ENCODE measurements at regions of chr19 and their contacts with region 1.

Region 1: DNA sequence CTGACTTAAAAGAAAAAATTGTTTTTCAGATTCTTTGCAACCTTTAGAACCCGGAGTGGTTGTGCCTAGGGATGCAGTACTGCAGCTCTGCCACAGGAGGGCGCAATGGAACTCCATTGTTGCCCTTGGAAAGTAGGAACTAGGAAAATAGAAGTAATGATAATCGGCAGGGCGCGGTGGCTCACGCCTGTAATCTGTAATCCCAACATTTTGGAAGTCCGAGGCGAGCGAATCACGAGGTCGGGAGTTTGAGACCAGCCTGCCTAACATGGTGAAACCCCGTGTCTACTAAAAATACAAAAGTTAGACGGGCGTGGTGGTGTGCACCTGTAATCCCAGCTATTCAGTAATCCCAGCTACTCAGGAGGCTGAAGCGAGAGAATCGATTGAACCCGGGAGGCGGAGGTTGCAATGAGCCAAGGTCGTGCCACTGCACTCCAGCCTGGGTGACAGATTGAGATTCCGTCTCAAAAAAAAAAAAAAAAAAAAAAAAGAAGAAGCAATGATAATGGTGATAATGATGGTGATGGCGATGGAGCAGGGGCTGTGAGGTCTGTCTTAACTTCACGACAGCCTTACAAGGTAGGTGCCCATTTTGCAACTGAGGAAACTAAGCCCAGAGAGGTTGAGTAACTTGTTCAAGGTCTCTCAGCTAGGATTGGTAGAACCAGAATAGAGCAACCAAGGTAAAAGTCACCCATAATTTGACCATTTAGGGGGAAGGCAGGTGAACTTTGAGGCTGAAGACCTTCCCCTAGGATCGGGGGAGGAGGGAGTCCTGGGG is 5.5 kb upstream of the ADAMTS10 start:
- DNase-seq: peak; percentile 37 to 70 (median 54)
- ATAC-seq: peak; percentile 83
- H3K4me3 ChIP-seq: no peak overlapping the region
- H3K4me3 Mint-ChIP-seq: peak overlapping the region in 5 of 10 donors; percentile 2 to 74 (median 30)
- H3K27ac ChIP-seq: no peak overlapping the region
- H3K27ac Mint-ChIP-seq: peak overlapping the region in 6 of 9 donors; percentile 19 to 72 (median 48)
- H3K4me1 ChIP-seq: peaks cover 7 to 11% of the 10 kb centered on the region in 2 donors
- H3K4me1 Mint-ChIP-seq: peaks cover 8 to 31% (median 25%) of the 10 kb centered on the region in 7 donors
- H3K27me3 ChIP-seq: no peaks in the 10 kb centered on the region
- H3K27me3 Mint-ChIP-seq: peaks cover 0 to 10% (median 4%) of the 10 kb centered on the region in 5 donors

Region 2: DNA sequence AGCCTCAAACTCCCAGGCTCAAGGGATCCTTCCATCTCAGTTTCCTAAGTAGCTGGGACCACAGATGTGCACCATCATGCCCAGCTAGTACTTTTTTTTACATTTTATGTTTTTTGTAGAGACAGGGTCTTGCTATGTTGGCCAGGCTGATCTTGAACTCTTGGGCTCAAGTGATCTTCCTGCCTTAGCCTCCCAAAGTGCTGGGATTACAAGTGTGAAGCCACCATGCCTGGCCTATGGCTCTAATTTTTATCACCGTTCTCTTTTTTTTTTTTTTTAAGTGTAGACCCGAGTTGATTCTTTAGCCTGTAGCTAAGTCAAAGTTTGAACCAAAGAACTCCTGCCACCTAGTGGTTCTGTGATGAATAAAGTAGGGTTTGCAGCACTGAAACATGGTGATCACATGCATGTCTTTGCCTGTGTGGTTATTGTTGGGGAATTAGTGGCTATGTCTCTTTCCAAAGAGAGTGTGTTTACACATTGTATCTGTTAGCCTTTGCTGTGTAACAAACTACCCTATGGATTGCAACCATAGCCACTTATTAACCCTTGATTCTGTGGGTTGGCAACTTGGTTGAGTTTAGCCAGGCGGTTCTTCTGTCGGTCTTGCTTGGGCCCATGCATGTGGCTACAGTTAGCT is 26.0 kb after region 1 on chr19:
- CTCF ChIA-PET with region 1: interaction called, 6 read pairs
- POLR2A ChIA-PET with region 1: interaction called, 9 read pairs
- intact Hi-C with region 1: loop called (anchors 1 kb)
- DNase-seq: peak in 7 of 9 donors; percentile 28 to 67 (median 51)
- ATAC-seq: peak; percentile 56
- H3K4me3 ChIP-seq: no peak overlapping the region
- H3K4me3 Mint-ChIP-seq: peak overlapping the region in 1 of 10 donors; percentile 18
- H3K27ac ChIP-seq: no peak overlapping the region
- H3K27ac Mint-ChIP-seq: peak overlapping the region in 1 of 9 donors; percentile 62
- H3K4me1 ChIP-seq: no peaks in the 10 kb centered on the region
- H3K4me1 Mint-ChIP-seq: peaks cover 5 to 16% (median 7%) of the 10 kb centered on the region in 7 donors
- H3K27me3 ChIP-seq: no peaks in the 10 kb centered on the region
- H3K27me3 Mint-ChIP-seq: peaks cover 12 to 32% (median 15%) of the 10 kb centered on the region in 5 donors

Region 3: DNA sequence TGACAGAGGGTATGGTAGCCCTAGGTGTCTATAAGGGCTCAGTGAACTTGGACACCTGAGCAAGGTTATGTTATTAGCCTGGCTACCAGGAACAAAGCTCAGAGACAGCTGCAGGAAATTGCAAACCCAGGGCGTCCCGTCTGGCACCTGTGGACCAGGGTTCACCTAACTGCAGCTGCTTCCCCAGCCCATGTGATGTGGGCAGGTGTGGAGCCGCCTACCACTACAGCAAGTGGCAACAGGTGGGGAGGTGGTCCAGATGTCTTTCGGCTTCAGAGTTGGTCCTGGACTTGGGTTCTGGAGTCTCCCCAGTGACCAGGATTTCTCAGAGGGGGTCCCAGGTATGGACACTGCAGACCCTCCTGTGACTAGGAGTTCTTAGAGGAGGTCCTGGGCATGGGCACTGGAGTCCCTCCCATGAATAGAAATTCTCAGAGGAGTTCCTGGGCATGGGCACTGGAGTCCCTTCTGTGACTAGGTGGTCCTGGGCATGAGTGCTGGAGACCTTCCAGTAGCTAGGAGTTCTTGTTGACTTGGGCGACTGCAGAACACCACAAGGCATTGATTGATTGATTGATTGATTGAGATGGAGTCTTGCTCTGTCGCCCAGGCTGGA is 57.4 kb after region 1 on chr19:
- CTCF ChIA-PET with region 1: no interaction called
- POLR2A ChIA-PET with region 1: no interaction called
- intact Hi-C with region 1: no loop called
- DNase-seq: no peak
- ATAC-seq: no peak
- H3K4me3 ChIP-seq: no peak overlapping the region
- H3K4me3 Mint-ChIP-seq: no peak overlapping the region
- H3K27ac ChIP-seq: no peak overlapping the region
- H3K27ac Mint-ChIP-seq: no peak overlapping the region
- H3K4me1 ChIP-seq: peaks cover 0 to 12% of the 10 kb centered on the region in 2 donors
- H3K4me1 Mint-ChIP-seq: peaks cover 7 to 32% (median 18%) of the 10 kb centered on the region in 7 donors
- H3K27me3 ChIP-seq: no peaks in the 10 kb centered on the region
- H3K27me3 Mint-ChIP-seq: peaks cover 0 to 8% (median 0%) of the 10 kb centered on the region in 5 donors

Region 4: DNA sequence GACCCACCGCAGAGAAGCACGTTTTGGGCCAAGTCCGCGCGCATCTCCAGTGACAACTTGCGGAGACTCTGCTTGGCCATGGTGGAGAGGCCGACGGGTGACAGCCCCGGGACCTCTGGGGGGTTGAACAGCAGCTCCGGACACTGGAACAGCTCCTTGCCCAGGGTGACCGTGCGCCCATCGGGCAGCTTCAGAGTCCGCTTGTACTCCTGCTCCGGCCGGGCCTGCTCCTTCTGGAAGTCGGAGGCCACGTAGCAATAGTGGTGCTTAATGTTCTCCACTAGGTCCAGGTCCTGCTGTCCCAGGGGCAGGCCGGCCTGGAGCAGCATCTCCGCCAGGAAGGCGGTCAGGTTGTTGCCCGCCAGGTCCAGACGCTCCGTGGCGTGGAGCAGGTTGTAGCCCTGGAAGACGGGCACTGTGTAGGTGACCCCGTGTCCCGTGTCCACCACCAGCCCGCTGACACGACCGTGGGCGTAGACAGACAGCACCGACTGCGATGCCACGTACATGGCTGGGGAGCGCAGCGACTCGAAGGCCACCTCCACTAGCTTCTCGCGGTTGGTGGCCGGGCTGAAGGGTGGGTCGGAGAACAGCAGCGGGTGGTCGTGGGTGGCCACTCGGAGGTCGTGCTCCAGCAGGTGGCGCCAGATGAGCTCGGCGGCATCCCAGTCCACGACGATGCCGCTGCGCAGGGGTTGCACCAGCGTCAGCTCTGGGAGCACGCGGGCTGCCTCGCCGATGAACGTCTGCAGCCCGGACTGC is 81.8 kb after region 1 on chr19:
- CTCF ChIA-PET with region 1: no interaction called
- POLR2A ChIA-PET with region 1: no interaction called
- intact Hi-C with region 1: loop called in 1 of 2 experiments (anchors 1 kb)
- DNase-seq: no peak
- ATAC-seq: no peak
- H3K4me3 ChIP-seq: no peak overlapping the region
- H3K4me3 Mint-ChIP-seq: no peak overlapping the region
- H3K27ac ChIP-seq: no peak overlapping the region
- H3K27ac Mint-ChIP-seq: no peak overlapping the region
- H3K4me1 ChIP-seq: peaks cover 26 to 27% of the 10 kb centered on the region in 2 donors
- H3K4me1 Mint-ChIP-seq: peaks cover 21 to 49% (median 24%) of the 10 kb centered on the region in 7 donors
- H3K27me3 ChIP-seq: peaks cover 0 to 4% of the 10 kb centered on the region in 2 donors
- H3K27me3 Mint-ChIP-seq: peaks cover 0 to 21% (median 0%) of the 10 kb centered on the region in 5 donors

Region 5: DNA sequence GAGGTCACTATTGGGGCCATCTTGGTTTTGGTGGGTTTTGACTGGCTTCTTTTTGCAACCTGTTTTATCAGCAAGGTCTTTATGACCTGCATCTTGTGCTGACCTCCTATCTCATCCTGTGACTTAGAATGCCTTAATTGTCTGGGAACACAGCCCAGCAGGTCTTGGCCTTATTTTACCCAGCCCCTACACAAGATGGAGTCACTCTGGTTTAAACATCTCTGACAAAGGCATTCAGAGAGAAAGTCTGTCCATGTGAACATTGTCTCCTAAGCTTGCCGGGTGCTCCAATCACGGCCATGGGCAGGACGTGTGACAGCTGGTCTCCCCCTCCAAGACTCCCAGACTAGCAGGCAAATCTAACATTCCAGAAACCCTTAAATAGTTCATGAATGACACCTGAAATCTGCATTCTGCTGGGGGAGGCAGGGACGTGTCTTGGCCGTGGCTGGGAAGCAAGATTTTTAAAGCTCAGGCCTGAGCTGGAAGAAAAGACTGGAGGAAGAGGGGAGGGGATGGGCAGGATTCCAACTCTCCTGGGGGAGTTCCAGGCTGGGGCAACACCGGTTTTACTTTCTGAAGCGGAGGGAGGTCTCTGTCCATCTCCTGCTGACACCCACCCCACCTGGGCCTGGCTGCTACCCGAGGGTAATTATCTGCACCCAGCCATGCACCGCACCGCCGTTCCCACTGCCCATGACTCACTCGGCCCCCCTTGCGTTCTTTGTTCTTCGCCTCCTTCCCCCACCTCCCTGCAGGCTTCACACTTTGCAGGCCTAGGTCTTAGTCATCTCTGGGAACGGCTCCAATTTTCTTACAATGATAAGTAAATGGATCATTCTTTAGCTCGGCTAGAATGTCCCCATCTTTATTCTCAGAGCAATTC is 459.3 kb after region 1 on chr19:
- CTCF ChIA-PET with region 1: no interaction called
- POLR2A ChIA-PET with region 1: no interaction called
- intact Hi-C with region 1: loop called in 1 of 2 experiments (anchors 1 kb)
- DNase-seq: no peak
- ATAC-seq: no peak
- H3K4me3 ChIP-seq: no peak overlapping the region
- H3K4me3 Mint-ChIP-seq: no peak overlapping the region
- H3K27ac ChIP-seq: no peak overlapping the region
- H3K27ac Mint-ChIP-seq: no peak overlapping the region
- H3K4me1 ChIP-seq: no peaks in the 10 kb centered on the region
- H3K4me1 Mint-ChIP-seq: peaks cover 0 to 6% (median 0%) of the 10 kb centered on the region in 7 donors
- H3K27me3 ChIP-seq: no peaks in the 10 kb centered on the region
- H3K27me3 Mint-ChIP-seq: no peaks in the 10 kb centered on the region

Measured in naive thymus-derived CD4-positive, alpha-beta T cell (primary cell).